OCI-LY7 (cell line): ENCODE measurements at regions of chr5 and their contacts with region 1.

Region 1: GRCh38 chr5:111223889-111224563 is at the start of gene CAMK4:
- DNase-seq: peak; percentile 82
- H3K4me3 ChIP-seq: peak within 1 kb of the TSS; percentile 75
- H3K27ac ChIP-seq: peak within 1 kb of the TSS; percentile 49
- H3K4me1 ChIP-seq: peaks cover 20% of the 10 kb centered on the region
- CTCF ChIP-seq: peak; percentile 43
- total RNA-seq, gene CAMK4: 36.5 and 40.2 TPM in 2 replicates

Region 2: DNA sequence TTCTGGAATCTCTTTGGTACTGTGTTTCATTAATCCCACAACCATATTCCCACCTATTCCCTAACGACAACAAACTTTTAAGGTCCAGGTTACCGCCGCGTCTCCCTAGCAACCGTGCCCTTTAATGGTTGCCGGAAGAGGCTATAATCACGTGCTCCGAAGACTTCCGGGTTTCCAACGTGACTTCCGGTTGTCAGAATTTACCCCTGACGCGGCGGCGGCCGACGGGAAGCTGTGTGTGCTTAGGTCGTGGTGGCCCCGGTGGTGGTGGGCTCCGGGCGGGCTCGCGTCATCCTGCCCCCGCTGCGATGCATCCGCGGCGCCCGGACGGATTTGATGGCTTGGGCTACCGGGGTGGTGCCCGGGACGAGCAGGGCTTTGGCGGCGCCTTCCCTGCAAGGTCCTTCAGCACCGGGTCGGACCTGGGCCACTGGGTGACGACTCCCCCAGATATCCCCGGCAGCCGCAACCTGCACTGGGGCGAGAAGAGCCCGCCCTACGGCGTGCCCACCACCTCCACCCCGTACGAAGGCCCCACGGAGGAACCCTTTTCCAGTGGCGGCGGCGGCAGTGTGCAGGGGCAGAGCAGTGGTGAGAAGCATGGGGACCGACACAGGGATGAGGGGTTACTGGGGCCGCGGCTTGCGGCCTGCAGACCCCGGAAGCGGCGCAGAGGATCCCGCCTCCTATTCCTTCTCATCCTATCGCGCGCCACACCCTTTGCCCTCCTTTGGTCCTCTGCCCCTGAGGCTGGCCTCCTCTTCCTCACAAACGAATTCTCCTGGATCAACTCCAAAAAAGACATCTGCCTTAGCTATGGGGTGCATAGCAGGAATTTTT is 485.0 kb before region 1 on chr5 and contains the start of gene SLC25A46:
- CTCF ChIA-PET with region 1: no interaction called
- POLR2A ChIA-PET with region 1: interaction called, 4 read pairs
- intact Hi-C with region 1: loop called (anchors 10 kb)
- DNase-seq: peak; percentile 92
- H3K4me3 ChIP-seq: peak within 1 kb of the TSS; percentile 94
- H3K27ac ChIP-seq: peak within 1 kb of the TSS; percentile 66
- H3K4me1 ChIP-seq: peaks cover 16% of the 10 kb centered on the region
- CTCF ChIP-seq: no peak
- total RNA-seq, gene SLC25A46: 36.4 and 37.8 TPM in 2 replicates

Region 3: GRCh38 chr5:110909950-110910349 is 314.1 kb before region 1 on chr5:
- CTCF ChIA-PET with region 1: no interaction called
- POLR2A ChIA-PET with region 1: no interaction called
- intact Hi-C with region 1: no loop called
- DNase-seq: no peak
- H3K4me3 ChIP-seq: no peak overlapping the region
- H3K27ac ChIP-seq: no peak overlapping the region
- H3K4me1 ChIP-seq: no peaks in the 10 kb centered on the region
- CTCF ChIP-seq: no peak

Region 4: DNA sequence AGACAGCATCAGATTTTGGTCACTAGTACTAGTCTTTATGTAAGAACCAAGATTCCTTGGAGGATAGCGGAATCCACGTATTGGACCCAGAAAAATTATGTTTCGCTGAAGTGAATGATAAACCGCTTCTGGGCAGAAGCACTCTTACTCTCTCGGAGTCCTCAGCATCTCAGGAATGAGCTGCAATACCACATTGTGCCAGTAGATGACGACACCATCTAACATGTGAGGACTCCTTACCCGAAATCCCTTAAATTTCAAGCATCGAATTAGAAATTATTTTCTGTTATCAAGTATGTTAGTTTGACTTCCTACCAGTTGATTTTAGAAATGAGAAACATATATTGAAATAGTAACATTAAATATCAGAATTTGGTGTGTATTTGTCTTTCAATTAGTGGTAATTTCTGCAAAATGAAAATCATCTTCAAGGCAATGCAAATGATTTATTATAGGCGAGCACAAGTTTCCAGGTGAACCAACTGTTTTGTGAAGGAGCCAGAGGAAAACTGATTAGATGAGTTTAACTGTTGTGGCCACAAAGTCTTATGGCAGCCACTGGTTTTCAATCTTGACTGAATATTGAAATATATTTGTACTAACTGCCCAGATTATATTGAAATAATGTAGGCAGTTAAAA is 65.8 kb before region 1 on chr5:
- CTCF ChIA-PET with region 1: no interaction called
- POLR2A ChIA-PET with region 1: interaction called, 3 read pairs
- intact Hi-C with region 1: loop called (anchors 5 kb)
- DNase-seq: peak; percentile 71
- H3K4me3 ChIP-seq: no peak overlapping the region
- H3K27ac ChIP-seq: no peak overlapping the region
- H3K4me1 ChIP-seq: no peaks in the 10 kb centered on the region
- CTCF ChIP-seq: peak; percentile 100

Region 5: GRCh38 chr5:111252799-111253545 is 28.9 kb after region 1 on chr5:
- CTCF ChIA-PET with region 1: no interaction called
- POLR2A ChIA-PET with region 1: interaction called, 4 read pairs
- intact Hi-C with region 1: loop called (anchors 2 kb)
- DNase-seq: peak; percentile 44
- H3K4me3 ChIP-seq: peak overlapping the region; percentile 0
- H3K27ac ChIP-seq: no peak overlapping the region
- H3K4me1 ChIP-seq: peaks cover 34% of the 10 kb centered on the region
- CTCF ChIP-seq: no peak

Region 6: DNA sequence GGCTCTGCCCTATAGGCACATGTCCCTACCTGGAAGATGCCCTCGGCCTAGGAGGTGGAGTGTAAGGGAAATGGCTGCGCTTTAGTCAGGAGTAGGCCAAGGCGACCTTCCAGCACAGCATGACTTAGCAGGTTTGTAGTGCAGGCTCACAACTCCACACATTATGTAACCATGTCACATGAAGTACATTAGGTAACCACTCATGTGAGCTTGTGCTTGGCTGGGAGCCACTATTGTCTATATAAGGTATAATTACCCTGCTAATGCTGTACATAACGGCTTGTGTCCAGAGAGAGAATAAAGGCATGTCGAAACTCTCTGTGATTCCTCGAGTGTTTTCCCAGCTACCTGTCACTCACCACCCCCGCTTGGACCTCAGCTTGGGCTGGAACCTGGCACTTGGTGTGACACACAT is 75.0 kb after region 1 on chr5:
- CTCF ChIA-PET with region 1: no interaction called
- POLR2A ChIA-PET with region 1: no interaction called
- intact Hi-C with region 1: no loop called
- DNase-seq: peak; percentile 56
- H3K4me3 ChIP-seq: no peak overlapping the region
- H3K27ac ChIP-seq: no peak overlapping the region
- H3K4me1 ChIP-seq: no peaks in the 10 kb centered on the region
- CTCF ChIP-seq: no peak

Region 7: DNA sequence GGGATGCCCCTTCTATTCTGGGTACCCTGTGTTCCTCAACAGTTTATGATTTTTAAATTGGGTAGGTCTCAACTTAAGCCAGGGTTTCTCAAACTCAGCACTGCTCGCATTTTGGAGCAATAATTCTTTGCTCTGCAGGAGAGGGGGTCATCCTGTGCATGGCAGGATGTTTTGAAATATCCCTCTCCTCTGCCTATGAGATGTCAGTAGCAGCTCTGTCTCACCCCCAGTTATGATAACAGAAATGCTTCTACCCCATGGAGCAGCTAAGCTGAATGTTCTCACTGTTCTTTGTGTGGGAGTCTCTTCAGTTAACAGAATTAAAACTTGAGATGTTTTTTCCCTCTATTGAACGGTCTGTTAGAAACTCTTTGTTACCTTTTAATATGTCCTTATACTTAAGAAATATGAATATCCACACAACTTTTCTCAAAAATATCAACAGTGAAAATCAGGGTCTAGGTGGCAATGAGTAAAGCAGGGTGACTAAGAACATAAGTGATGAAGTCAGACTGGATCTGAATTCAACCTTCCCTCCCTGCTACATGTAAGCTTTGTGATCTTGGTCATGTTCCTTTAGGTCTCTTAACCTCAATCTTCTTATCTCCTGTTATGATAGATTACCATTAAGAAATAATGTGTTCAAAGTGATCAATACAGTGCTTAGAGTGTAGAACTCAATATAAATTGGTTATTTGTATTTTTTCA is 89.1 kb after region 1 on chr5:
- CTCF ChIA-PET with region 1: interaction called, 11 read pairs
- POLR2A ChIA-PET with region 1: interaction called, 4 read pairs
- intact Hi-C with region 1: no loop called
- DNase-seq: no peak
- H3K4me3 ChIP-seq: no peak overlapping the region
- H3K27ac ChIP-seq: no peak overlapping the region
- H3K4me1 ChIP-seq: no peaks in the 10 kb centered on the region
- CTCF ChIP-seq: no peak

Region 8: DNA sequence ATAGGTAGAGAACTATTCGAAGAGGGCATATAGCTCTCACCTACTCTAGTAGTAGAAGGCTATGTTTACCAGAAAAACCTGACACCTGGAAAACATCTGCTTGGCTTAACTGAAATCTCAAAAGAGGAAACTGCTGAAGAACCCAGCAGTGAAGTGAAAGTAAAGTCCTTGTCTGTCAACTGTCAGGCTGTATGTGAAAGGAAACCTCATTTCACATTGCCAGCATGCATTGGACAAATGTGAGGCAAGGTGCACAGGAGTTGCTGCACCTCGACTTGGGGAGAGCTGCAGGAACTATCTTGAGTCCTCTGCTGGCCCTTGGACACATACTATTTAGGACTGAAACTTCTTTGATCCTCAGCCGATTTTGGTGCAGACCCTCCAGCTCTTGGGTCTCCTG is 479.6 kb after region 1 on chr5:
- CTCF ChIA-PET with region 1: no interaction called
- POLR2A ChIA-PET with region 1: no interaction called
- intact Hi-C with region 1: loop called (anchors 10 kb)
- DNase-seq: peak; percentile 93
- H3K4me3 ChIP-seq: peak overlapping the region; percentile 67
- H3K27ac ChIP-seq: peak overlapping the region; percentile 98
- H3K4me1 ChIP-seq: peaks cover 62% of the 10 kb centered on the region
- CTCF ChIP-seq: no peak